ENCODE measurements at regions of chr12 and their contacts with region 1.

Region 1: DNA sequence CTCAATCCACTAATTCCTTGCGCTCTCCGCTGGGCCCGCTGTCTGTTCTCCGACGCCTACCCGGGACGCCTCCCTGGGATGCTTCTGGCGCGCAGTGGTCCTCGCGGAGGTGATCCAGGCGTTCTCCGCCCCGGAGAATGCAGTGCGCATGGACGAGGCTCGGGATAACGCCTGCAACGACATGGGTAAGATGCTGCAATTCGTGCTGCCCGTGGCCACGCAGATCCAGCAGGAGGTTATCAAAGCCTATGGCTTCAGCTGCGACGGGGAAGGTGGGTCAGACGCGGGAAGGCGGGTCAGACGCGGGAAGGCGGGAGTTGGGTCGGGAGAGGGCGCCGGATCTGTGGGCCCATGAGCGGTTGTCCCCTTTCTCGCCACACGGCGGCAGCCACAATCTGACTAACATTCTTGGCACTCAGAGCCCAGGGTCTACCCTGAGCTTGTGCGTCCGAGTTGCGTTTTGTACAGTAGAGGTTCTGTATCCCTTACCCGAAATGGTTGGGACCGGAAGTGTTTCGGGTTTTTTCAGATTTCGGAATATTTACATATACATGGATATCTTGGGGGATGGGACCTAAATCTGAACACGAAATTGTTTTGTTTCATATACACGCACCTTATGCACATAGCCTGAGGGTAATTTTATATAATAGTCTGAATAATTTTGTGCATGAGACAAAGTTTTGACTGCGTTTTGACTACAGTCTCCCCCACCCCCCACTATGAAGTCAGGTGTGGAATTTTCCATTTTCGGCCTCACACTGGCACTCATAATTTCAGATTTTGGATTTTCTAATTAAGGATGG is 762 bp downstream of the C12orf57 start:
- H3K4me3 ChIP-seq: peak overlapping the region; percentile 61
- H3K27ac ChIP-seq: peak overlapping the region; percentile 87
- H3K4me1 ChIP-seq: peaks cover 14% of the 10 kb centered on the region
- CTCF ChIP-seq: peak; percentile 99

Region 2: GRCh38 chr12:6824085-6824775 is 120.4 kb before region 1 on chr12:
- CTCF ChIA-PET with region 1: no interaction called
- POLR2A ChIA-PET with region 1: no interaction called
- H3K4me3 ChIP-seq: no peak overlapping the region
- H3K27ac ChIP-seq: no peak overlapping the region
- H3K4me1 ChIP-seq: peaks cover 6% of the 10 kb centered on the region; the same call in 1 of the 2 replicates
- CTCF ChIP-seq: 0 out of 2 replicates have a peak, but pooled peaks have one; percentile 22

Region 3: GRCh38 chr12:6851921-6852650 is 92.5 kb before region 1 on chr12 and contains the start of gene USP5:
- CTCF ChIA-PET with region 1: no interaction called
- POLR2A ChIA-PET with region 1: interaction called, 27 read pairs
- H3K4me3 ChIP-seq: peak within 1 kb of the TSS; percentile 76
- H3K27ac ChIP-seq: peak within 1 kb of the TSS; percentile 58
- H3K4me1 ChIP-seq: peaks cover 11% of the 10 kb centered on the region
- CTCF ChIP-seq: peak; percentile 70

Region 4: DNA sequence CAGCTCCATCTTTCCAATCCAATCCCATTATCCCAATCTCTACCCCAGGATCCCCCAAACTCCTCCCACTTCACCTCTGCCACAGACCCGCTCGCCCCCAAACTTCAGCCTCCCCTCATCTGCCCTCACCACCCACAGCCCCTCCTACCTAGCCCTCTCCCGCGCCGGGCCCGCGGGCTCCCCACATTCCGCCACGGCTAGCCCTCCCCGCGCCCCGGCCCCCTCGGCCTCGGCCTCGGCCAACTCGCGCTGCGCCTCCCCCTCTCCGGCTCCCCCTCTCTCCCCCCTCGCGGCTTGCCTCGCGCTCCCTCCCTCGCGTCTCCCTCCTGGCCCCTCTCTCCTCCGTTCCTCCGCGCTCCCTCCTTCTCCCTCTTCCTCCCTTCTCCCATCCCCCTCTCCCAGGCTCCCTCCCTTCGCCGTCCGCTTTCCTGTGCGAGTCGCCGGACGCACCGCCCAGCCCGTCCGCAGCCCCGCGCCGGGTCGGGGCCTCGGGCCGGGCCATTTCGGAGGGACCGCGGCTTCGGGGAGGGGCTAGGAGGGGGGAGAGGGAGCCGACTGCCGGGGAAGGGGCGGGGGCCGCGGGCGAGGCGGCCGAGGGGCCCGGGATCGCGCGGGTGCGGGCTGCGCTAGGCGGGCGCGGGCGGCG is 17.1 kb before region 1 on chr12 and contains the start of gene ATN1:
- CTCF ChIA-PET with region 1: interaction called, 53 read pairs
- POLR2A ChIA-PET with region 1: interaction called, 99 read pairs
- H3K4me3 ChIP-seq: peak within 1 kb of the TSS; percentile 74
- H3K27ac ChIP-seq: peak within 1 kb of the TSS; percentile 80
- H3K4me1 ChIP-seq: peaks cover 28% of the 10 kb centered on the region
- CTCF ChIP-seq: 0 out of 2 replicates have a peak, but pooled peaks have one; percentile 38

Region 5: DNA sequence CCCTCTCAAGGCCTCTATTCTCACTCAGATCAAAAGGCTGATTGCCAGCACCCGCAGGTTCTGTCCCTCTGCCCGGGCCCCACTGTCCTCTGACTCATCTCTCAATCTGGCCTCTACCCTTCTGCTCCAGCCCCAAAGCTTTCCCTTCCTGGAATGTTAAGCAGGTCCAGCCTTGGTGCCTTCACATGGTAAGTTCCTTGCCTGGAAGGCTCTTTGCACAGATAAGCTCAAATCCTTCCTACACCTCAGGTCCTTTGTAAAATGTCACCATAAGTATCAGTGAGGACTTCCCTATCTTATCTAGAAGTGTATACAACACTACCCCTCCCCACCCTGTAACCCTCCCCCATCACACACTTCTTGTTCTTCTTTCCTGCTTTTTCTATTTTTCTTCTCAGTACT is 51.5 kb after region 1 on chr12:
- CTCF ChIA-PET with region 1: no interaction called
- POLR2A ChIA-PET with region 1: no interaction called
- H3K4me3 ChIP-seq: no peak overlapping the region
- H3K27ac ChIP-seq: no peak overlapping the region
- H3K4me1 ChIP-seq: no peaks in the 10 kb centered on the region
- CTCF ChIP-seq: no peak

Region 6: GRCh38 chr12:7018350-7019042 is 73.9 kb after region 1 on chr12 and contains the start of gene LPCAT3:
- CTCF ChIA-PET with region 1: no interaction called
- POLR2A ChIA-PET with region 1: interaction called, 13 read pairs
- H3K4me3 ChIP-seq: peak within 1 kb of the TSS; percentile 89
- H3K27ac ChIP-seq: peak within 1 kb of the TSS; percentile 90
- H3K4me1 ChIP-seq: peaks cover 25% of the 10 kb centered on the region
- CTCF ChIP-seq: peak; percentile 92

Region 7: GRCh38 chr12:7108796-7109571 is 164.4 kb after region 1 on chr12 and contains the start of gene C1RL:
- CTCF ChIA-PET with region 1: interaction called, 18 read pairs
- POLR2A ChIA-PET with region 1: interaction called, 20 read pairs
- H3K4me3 ChIP-seq: peak within 1 kb of the TSS; percentile 66
- H3K27ac ChIP-seq: peak within 1 kb of the TSS; percentile 21; the same call in 1 of the 2 replicates
- H3K4me1 ChIP-seq: no peaks in the 10 kb centered on the region
- CTCF ChIP-seq: peak; percentile 70; the same call in 1 of the 2 replicates

Region 8: DNA sequence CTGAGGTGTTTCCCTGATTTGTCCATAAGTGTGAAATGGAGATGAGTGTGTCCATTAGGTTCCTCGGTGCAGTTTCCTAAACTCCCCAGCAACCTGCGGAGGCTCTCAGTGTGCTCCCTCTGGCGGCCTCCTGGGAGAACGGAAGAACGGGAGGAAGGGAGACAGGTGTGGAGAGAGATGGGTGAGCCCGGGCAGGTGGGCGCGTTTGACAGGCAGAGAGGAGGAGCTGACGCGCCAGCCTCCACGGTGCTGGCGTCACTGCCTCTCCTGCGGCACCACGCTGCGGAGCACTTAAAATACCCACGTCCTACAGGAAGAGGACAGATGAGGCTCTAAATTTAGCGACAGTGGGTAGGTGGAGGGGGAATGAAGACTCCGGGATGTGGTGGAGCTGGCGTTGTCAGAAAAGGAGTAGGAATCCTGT is 218.1 kb after region 1 on chr12:
- CTCF ChIA-PET with region 1: no interaction called
- POLR2A ChIA-PET with region 1: no interaction called
- H3K4me3 ChIP-seq: no peak overlapping the region
- H3K27ac ChIP-seq: no peak overlapping the region
- H3K4me1 ChIP-seq: no peaks in the 10 kb centered on the region
- CTCF ChIP-seq: peak; percentile 46; the same call in 1 of the 2 replicates

Region 9: DNA sequence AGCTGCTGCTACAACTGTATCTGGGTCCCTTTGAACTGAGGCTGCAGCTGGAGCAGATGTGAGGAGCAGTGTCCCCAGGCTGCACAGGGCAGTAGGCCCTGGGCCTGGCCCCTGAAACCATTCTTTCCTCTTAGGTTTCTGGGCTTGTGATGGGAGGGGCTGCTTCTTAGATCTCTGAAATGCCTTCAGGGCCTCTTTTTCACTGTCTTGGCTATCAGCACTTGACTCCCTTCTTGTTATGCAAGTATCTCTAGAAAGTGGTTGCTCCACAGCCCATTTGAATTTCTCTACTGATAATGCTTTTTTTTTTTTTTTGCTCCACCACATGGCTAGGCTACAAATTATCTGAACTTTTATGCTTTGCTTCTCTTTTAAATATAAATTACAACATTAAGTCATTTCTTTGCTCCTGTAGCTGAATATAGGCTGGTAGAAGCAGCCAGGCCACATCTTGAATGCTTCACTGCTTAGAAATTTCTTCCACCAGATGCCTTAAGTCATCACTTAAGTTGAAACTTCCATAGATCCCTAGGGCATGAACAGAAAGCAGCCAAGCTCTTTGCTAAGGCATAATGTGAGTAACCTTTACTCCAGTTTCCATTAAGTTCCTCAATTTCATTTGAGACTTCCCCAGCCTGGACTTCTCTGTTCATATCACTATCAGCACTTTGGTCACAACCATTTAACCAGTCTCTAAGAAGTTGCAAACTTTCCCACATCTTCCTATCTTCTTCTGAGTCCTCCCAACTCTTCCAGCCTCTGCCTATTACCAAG is 400.4 kb after region 1 on chr12:
- CTCF ChIA-PET with region 1: no interaction called
- POLR2A ChIA-PET with region 1: no interaction called
- H3K4me3 ChIP-seq: no peak overlapping the region
- H3K27ac ChIP-seq: no peak overlapping the region
- H3K4me1 ChIP-seq: no peaks in the 10 kb centered on the region
- CTCF ChIP-seq: no peak

Measured in HEK293 (cell line).